ENCODE measurements at regions of chr11 and their contacts with region 1.

Region 1: DNA sequence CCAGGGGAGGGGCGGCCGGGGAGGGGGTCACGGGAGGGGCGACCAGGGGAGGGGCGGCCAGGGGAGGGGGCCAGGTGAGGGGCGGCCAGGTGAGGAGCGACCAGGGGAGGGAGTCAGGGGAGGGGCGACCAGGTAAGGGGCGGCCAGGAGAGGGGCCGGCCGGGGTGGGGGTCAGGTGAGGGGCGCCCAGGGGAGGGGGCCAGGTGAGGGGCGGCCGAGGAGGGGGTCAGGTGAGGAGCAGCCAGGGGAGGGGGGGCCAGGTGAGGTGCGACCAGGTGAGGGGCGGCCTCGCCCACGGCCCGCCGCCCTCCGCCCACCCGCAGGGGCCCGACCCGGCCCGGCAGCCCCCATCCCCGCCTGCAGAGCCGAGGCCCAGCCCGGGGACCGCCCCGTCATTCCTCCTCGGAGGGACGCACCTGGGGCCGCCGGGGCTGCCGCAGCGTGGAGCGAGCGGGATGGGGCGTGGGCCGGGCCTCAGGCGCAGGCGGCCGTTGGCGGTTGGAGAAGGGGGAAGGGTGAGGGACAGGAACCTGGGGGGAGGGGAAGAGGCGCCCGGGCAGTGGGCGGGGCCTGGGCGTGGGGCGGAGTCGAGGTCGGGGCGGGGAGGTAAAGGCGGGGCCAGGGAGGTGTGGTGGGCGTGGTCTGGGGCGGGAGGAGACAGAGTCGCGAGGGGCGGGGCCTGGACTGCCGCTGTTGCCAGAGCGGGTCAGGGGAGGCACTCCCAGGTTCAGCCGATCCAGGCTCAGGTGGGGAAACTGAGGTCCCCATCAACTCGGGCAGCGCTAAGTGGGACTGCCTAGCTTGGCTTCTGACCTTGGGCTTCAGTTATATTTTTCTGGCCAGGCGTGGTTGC is at the start of gene TESMIN:
- DNase-seq: peak; percentile 90
- ATAC-seq: peak; percentile 99
- H3K4me3 Mint-ChIP-seq: peak within 1 kb of the TSS; percentile 77
- H3K27ac Mint-ChIP-seq: no peak within 1 kb of the TSS
- H3K4me1 Mint-ChIP-seq: peaks cover 11% of the 10 kb centered on the region
- H3K27me3 Mint-ChIP-seq: no peaks in the 10 kb centered on the region
- CTCF ChIP-seq: no peak
- total RNA-seq, gene TESMIN: 1.8 and 3.0 TPM in 2 replicates

Region 2: GRCh38 chr11:68235650-68236049 is 515.6 kb before region 1 on chr11:
- CTCF ChIA-PET with region 1: no interaction called
- POLR2A ChIA-PET with region 1: no interaction called
- intact Hi-C with region 1: no loop called
- DNase-seq: no peak
- ATAC-seq: no peak
- H3K4me3 Mint-ChIP-seq: no peak overlapping the region
- H3K27ac Mint-ChIP-seq: no peak overlapping the region
- H3K4me1 Mint-ChIP-seq: no peaks in the 10 kb centered on the region
- H3K27me3 Mint-ChIP-seq: peaks cover 15% of the 10 kb centered on the region
- CTCF ChIP-seq: no peak

Region 3: GRCh38 chr11:68704887-68705286 is 46.3 kb before region 1 on chr11:
- CTCF ChIA-PET with region 1: no interaction called
- POLR2A ChIA-PET with region 1: no interaction called
- intact Hi-C with region 1: no loop called
- DNase-seq: no peak
- ATAC-seq: no peak
- H3K4me3 Mint-ChIP-seq: no peak overlapping the region
- H3K27ac Mint-ChIP-seq: no peak overlapping the region
- H3K4me1 Mint-ChIP-seq: no peaks in the 10 kb centered on the region
- H3K27me3 Mint-ChIP-seq: peaks cover 13% of the 10 kb centered on the region
- CTCF ChIP-seq: no peak

Region 4: DNA sequence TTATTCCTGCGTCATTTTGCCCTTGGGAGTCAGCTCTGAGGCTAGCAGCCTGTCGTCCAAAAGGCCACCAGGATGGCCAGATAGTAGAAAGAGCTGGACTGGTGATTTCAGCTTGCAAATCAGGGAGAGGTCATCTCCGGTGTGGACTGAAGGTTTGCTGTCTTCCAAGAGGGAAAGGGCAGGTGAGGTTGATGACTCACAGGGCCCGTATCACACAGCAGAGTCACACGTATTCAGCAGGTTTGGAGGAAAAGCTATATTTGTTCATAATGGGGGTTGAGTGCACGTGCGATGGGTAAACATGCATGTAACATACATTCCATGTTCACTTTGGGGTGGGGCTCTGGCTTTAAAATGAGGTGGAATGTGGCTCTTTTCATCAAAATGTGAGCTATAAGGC is 126.8 kb after region 1 on chr11:
- CTCF ChIA-PET with region 1: no interaction called
- POLR2A ChIA-PET with region 1: no interaction called
- intact Hi-C with region 1: no loop called
- DNase-seq: no peak
- ATAC-seq: no peak
- H3K4me3 Mint-ChIP-seq: no peak overlapping the region
- H3K27ac Mint-ChIP-seq: no peak overlapping the region
- H3K4me1 Mint-ChIP-seq: no peaks in the 10 kb centered on the region
- H3K27me3 Mint-ChIP-seq: no peaks in the 10 kb centered on the region
- CTCF ChIP-seq: no peak

Region 5: GRCh38 chr11:68903288-68904247 is 152.3 kb after region 1 on chr11 and contains the starts of genes IGHMBP2 and MRPL21:
- CTCF ChIA-PET with region 1: no interaction called
- POLR2A ChIA-PET with region 1: no interaction called
- intact Hi-C with region 1: loop called (anchors 5 kb)
- DNase-seq: peak; percentile 87
- ATAC-seq: peak; percentile 96
- H3K4me3 Mint-ChIP-seq: peak within 1 kb of the TSS; percentile 97
- H3K27ac Mint-ChIP-seq: peak within 1 kb of the TSS; percentile 82
- H3K4me1 Mint-ChIP-seq: peaks cover 44% of the 10 kb centered on the region
- H3K27me3 Mint-ChIP-seq: no peaks in the 10 kb centered on the region
- CTCF ChIP-seq: no peak
- total RNA-seq, gene IGHMBP2: 24.2 and 33.8 TPM in 2 replicates
- total RNA-seq, gene MRPL21: 49.9 and 60.0 TPM in 2 replicates

Region 6: DNA sequence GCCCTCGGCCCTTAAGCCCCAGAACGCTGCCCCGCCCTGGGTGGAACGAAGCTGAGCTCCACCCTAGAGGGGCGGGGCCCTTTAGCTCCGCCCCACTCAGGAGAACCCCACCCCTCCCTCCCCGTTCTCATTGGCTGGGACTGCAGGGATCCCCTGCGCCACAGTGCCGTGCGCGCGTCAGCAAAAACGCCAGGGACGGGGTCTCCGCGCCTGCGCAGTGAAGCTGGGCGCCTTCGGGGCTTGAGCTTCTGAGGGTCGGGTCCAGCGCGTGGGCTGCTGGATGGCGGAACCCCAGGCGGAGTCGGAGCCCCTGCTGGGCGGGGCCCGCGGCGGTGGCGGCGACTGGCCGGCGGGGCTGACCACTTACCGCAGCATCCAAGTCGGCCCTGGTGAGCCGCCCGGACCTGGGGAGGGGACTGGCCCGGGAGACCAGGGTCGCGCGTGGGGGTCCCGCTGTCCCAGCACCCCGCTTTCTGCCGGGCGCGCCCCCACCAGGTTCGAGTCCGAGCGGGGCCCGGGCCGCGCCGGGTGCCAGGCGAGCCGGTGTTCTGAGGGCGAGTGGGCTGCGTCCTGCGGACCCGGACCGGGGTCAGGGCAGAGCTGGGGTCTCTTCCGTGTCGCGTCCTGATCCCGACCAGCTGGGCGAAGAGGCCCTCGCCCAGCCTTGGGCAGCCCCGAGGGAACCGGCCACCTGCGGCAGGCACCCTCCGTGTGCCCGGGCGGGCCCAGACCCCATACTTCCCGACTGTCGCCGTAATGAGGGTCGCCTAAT is 297.7 kb after region 1 on chr11 and contains the start of gene TPCN2:
- CTCF ChIA-PET with region 1: no interaction called
- POLR2A ChIA-PET with region 1: no interaction called
- intact Hi-C with region 1: loop called (anchors 1 kb)
- DNase-seq: peak; percentile 89
- ATAC-seq: peak; percentile 99
- H3K4me3 Mint-ChIP-seq: peak within 1 kb of the TSS; percentile 81
- H3K27ac Mint-ChIP-seq: peak within 1 kb of the TSS; percentile 70
- H3K4me1 Mint-ChIP-seq: peaks cover 47% of the 10 kb centered on the region
- H3K27me3 Mint-ChIP-seq: peaks cover 8% of the 10 kb centered on the region
- CTCF ChIP-seq: no peak
- total RNA-seq, gene TPCN2: 29.1 and 35.4 TPM in 2 replicates